Mammary epithelial cell (primary cell): ENCODE measurements at regions of chrX and their contacts with region 1.

Region 1: GRCh38 chrX:103774070-103774642 is 2.5 kb upstream of the PLP1 start:
- DNase-seq: peak; percentile 32
- H3K4me3 ChIP-seq: no peak overlapping the region
- H3K27ac ChIP-seq: no peak overlapping the region
- H3K4me1 ChIP-seq: no peaks in the 10 kb centered on the region
- H3K27me3 ChIP-seq: no peaks in the 10 kb centered on the region
- CTCF ChIP-seq: peak; percentile 54 to 73

Region 2: DNA sequence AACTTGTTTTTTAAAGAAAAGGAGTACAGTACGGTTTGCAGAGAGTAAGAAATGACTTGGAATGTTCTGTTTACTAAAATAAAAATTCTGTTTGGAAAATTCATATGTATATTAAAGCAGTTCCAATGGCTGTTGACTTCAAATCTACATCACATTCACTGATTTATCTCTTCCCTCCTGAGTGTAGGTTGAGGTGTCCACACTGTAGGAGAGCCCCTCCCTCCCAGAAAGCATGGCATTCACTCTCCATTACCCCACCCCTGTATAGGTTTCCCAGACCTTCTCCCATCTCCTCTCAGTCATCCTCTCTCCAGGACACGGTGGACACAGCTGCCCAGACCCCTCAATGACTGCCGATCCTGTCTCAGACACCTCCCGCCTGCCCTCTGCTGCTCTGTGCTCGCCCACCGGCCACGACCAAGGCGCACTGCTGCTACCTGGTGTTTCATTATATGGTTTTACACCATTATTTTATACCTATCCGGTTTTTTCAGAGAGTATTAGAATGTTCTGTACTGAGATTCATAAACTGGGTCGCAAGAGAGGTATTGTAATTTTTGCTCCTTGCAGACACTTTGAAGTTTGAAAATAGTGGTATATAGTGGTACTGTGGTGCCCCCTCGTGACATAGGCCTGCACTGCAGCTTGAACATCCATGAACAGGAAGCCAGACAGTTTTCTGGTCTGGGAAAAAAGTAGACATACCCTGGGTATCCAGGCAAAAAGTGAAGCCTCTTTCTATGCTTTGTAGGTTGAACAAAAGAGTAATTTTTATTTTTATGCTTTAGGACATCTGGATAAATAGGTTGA is 598.0 kb before region 1 on chrX:
- CTCF ChIA-PET with region 1: no interaction called
- dilution Hi-C with region 1: no loop called
- in situ Hi-C with region 1: no loop called
- intact Hi-C with region 1: no loop called
- DNase-seq: peak; percentile 23
- H3K4me3 ChIP-seq: peak overlapping the region in 2 of 3 experiments; percentile 19 to 20
- H3K27ac ChIP-seq: no peak overlapping the region
- H3K4me1 ChIP-seq: no peaks in the 10 kb centered on the region
- H3K27me3 ChIP-seq: no peaks in the 10 kb centered on the region
- CTCF ChIP-seq: peak; percentile 82 to 95

Region 3: DNA sequence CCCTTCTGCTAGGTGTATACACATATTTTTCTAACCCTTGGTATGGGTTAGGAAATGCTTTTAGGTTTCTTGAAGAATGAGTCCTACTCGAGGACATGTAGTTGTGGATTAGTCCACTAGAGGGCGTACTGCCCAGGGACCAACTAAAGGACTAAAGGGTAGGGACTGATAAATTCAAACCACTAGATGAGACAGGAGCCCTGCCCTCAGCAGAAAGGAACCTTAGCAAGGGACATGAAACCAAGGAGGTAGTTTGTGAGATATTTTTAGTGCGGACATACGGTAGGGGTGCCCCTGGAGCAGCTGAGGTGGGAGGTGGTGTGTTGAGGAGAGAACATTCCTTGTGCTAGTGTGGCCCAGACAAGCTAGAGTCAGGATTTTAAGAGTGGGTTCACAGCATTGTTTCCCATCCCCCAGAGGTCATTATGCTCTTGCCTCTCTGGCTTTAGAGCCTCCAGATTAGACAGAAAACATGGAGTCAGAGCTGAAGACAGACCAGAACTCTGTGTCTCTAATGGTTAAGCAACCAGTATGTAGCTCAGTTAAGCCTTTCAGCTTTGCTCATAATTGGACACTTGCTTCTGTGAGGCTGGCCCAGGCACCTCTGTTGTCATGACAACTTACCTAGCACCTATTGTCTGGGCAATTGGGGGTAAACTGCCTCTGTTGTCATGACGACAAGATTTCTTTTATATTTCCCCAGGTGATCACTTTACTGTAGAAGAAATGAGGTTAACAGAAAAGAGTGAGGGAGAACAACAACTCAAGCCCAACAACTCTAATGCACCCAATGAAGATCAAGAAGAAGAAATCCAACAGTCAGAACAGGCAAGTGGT is 62.4 kb before region 1 on chrX:
- CTCF ChIA-PET with region 1: interaction called, 5 read pairs
- dilution Hi-C with region 1: no loop called
- in situ Hi-C with region 1: loop called in 1 of 2 experiments (anchors 10 kb)
- intact Hi-C with region 1: loop called (anchors 1 kb)
- DNase-seq: peak; percentile 39
- H3K4me3 ChIP-seq: no peak overlapping the region
- H3K27ac ChIP-seq: no peak overlapping the region
- H3K4me1 ChIP-seq: peaks cover 3% of the 10 kb centered on the region
- H3K27me3 ChIP-seq: peaks cover 2% of the 10 kb centered on the region
- CTCF ChIP-seq: peak; percentile 72 to 73

Region 4: DNA sequence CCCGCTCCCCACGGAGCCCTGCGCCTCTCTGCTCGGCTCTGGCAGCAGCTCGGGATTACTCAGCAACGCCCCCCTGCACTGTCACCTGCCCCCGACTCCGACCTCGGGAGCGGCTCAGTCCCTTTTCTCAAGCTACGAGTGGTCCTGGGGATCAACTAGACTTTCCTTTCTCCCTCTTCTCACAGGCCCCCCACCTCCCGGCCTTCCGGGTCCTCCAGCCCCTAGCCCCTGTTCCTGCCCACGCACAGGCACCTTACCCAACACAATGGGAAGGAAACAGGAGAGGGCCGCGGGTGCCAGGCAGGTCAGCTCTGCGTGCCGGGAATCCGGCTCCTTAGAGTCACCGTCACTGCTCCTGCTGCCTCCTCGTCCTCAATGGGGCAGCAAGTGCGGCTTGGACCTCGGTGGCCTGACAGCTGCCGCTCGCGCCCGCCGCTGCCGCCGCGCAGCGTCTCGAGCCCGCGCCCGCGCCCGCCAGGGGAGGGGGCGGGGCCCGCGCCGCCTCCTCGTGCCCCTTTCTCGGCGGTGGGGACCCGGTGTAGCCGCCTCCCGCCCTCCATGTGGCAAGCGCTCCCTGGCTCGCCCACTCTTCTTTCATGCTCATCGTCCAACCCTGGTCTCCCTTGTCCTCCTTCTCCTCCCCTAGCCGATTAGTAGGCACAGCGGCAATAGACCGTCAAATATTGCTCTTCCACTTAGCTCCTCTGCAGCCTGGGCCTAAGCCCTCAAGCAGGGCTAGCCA is 57.8 kb after region 1 on chrX and contains the start of gene RAB9B:
- CTCF ChIA-PET with region 1: no interaction called
- dilution Hi-C with region 1: no loop called
- in situ Hi-C with region 1: no loop called
- intact Hi-C with region 1: no loop called
- DNase-seq: peak; percentile 38
- H3K4me3 ChIP-seq: peak within 1 kb of the TSS; percentile 45 to 65 (median 59)
- H3K27ac ChIP-seq: no peak within 1 kb of the TSS
- H3K4me1 ChIP-seq: peaks cover 4% of the 10 kb centered on the region
- H3K27me3 ChIP-seq: no peaks in the 10 kb centered on the region
- CTCF ChIP-seq: no peak
- total RNA-seq, gene RAB9B: 0.80 to 4.5 TPM

Region 5: GRCh38 chrX:105564501-105564900 is 1790.3 kb after region 1 on chrX:
- CTCF ChIA-PET with region 1: no interaction called
- dilution Hi-C with region 1: no loop called
- in situ Hi-C with region 1: no loop called
- intact Hi-C with region 1: no loop called
- DNase-seq: peak; percentile 87
- H3K4me3 ChIP-seq: no peak overlapping the region
- H3K27ac ChIP-seq: peak overlapping the region; percentile 94
- H3K4me1 ChIP-seq: peaks cover 33% of the 10 kb centered on the region
- H3K27me3 ChIP-seq: no peaks in the 10 kb centered on the region
- CTCF ChIP-seq: no peak